Common myeloid progenitor, CD34-positive (primary cell): ENCODE measurements at regions of chr3 and their contacts with region 1.

Region 1: DNA sequence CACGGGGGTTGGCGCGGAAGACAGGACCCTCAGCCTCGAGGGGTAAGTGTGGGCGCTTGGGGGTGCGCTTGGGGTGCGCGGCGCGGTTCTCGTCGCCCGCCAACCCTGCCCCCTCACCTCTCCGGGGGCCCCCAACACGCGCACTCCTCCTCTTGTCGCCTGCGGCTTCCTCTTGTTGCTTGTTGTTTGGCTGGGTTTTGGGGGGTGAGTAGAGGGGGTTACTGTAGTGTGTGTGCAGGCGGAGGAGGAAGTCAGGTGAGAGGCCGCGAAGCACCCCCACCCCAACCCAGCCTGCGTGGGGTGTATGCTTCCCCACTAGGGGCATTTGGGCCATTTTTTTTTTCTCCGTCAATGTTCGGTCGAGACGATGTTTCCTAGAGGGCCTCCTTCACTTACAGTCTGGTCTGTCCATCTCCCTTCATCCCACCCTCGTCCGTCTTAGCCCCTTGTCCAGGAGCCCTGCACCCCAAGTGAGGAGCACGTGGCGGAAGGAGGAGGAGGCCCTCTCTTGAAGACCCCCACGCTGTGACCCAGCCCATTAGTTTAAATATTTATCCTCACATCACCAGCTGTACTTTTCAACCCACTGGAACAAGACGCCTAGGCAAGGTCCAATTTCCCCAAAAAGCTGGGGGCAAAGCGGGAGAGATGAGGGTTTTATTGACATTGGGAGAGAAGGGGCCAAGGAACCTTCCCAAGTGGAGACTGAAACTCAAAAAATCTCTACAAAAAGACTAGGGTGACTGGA is 20.4 kb upstream of the SATB1 start:
- DNase-seq: peak; percentile 89 to 96 (median 94)
- H3K4me3 ChIP-seq: peak overlapping the region; percentile 76 to 98 (median 91)
- H3K27ac ChIP-seq: peak overlapping the region; percentile 55 to 79
- H3K4me1 ChIP-seq: peaks cover 26 to 54% (median 38%) of the 10 kb centered on the region in 4 experiments
- H3K27me3 ChIP-seq: no peaks in the 10 kb centered on the region

Region 2: DNA sequence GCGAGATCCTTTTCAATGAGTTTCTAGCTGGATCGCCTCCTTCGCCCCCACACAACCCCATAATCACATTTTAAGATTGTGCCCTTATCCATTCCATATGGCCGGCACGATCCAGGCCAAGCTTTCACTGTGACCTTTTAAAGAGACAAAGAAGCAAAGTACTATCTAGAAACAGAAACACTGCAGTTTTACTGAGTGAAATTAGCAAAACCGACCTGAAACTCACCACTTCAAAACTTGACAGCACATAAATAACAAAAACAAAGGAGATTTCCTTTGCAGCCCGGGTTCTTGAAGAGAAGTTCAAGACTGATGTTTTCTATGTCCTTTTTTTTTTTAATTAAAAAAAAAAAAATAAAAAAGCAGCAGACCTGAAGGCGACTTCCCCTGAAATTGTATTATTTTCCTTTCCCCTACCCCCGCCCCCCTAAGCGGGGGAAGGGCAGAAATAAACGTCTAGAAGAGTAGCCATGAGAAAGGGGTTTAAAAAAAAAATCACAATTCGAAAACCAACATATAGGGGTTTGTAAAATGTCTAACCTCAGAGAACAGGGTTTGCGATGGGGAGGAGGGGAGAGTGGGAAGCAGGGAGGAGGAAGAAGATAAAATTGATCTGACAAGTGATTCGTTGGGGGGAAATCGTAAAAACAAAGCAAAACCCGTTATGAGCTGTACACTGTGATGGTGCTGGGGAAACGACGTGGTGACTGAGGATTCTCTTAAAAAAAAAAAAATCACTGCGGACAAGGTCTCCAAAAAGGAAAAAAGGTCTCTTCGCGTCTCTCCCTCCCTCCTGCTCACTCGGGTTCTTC is 22.0 kb before region 1 on chr3:
- CTCF ChIA-PET with region 1: interaction called, 11 read pairs
- POLR2A ChIA-PET with region 1: interaction called, 6 read pairs
- DNase-seq: peak in 2 of 3 donors; percentile 73 to 81
- H3K4me3 ChIP-seq: peak overlapping the region; percentile 77 to 97 (median 95)
- H3K27ac ChIP-seq: peak overlapping the region; percentile 61 to 93
- H3K4me1 ChIP-seq: peaks cover 6 to 37% (median 26%) of the 10 kb centered on the region in 4 experiments
- H3K27me3 ChIP-seq: no peaks in the 10 kb centered on the region